Body of pancreas (tissue), 4 donors: ENCODE measurements at regions of chr20 and their contacts with region 1.

Region 1: GRCh38 chr20:22586645-22587310 is 2.4 kb upstream of the FOXA2 start:
- DNase-seq: peak; percentile 73 to 89 (median 81)
- ATAC-seq: no peak
- H3K4me3 ChIP-seq: no peak overlapping the region
- H3K27ac ChIP-seq: no peak overlapping the region
- H3K4me1 ChIP-seq: peaks cover 21% of the 10 kb centered on the region
- H3K27me3 ChIP-seq: no peaks in the 10 kb centered on the region
- CTCF ChIP-seq: peak; percentile 84 to 94 (median 86)
- POLR2A ChIP-seq: no peak

Region 2: DNA sequence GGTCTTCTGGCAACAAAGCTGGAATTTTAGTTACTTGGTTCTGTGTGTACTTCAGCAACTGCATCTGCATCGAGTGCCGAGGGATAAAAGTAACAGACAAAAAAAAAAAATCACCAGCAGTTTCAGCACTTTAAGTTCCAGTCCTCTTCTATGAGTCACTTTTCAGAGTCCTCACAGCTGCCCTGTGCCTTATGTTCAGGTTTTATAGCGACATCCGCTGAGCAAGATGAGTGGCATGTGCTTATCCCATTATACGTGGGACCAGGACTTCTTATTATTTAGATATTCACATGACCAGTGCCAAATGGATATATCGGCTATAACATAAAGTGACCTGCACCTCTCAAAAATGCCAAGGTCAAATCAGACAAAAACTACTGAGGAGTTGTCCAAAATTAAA is 245.3 kb before region 1 on chr20:
- intact Hi-C with region 1: loop called (anchors 5 kb)
- DNase-seq: no peak
- ATAC-seq: no peak
- H3K4me3 ChIP-seq: no peak overlapping the region
- H3K27ac ChIP-seq: no peak overlapping the region
- H3K4me1 ChIP-seq: no peaks in the 10 kb centered on the region
- H3K27me3 ChIP-seq: no peaks in the 10 kb centered on the region
- CTCF ChIP-seq: no peak
- POLR2A ChIP-seq: no peak

Region 3: DNA sequence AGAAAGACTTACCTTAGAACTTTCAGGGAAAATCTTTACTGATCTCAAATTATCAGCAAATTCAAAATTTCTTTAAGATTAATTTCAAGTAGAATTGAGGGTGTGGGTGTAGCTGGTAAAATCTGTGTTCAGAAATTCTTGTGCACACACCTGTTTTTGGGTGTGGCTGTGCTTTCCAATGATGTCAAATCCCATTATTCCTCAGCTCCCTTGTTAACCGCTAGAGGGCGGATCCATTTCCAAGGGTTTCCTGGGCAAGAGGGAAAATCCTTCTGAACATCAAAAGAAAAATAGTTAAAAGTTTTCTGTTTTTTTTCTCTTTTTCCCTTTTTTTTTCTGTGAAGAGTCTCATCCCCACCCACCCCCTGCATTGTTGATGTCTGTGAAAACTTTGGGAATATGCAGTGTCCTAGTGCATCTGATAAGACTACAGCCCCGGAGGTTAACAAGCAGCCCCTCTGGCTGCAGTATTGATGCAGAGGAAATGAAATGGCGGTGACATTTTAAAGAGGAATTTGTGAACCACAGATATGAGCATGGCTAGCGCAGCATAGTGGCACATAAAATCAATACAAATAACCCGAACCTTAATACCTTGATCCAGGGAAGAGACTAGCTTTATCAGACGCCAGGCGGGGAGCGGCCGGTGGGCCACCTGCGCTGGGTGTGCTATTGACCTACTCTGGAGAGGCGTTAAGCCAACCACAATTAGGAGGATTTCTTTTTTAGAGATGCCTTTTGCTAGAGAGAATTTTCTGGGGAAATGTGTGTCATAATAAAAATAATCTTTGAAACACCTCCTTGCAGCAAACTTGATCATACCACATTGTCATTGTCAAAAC is 133.3 kb before region 1 on chr20:
- intact Hi-C with region 1: loop called (anchors 10 kb)
- DNase-seq: peak; percentile 46 to 55 (median 54)
- ATAC-seq: peak; percentile 83
- H3K4me3 ChIP-seq: no peak overlapping the region
- H3K27ac ChIP-seq: no peak overlapping the region
- H3K4me1 ChIP-seq: peaks cover 13% of the 10 kb centered on the region
- H3K27me3 ChIP-seq: no peaks in the 10 kb centered on the region
- CTCF ChIP-seq: peak; percentile 48 to 82 (median 76)
- POLR2A ChIP-seq: no peak